Caco-2 (cell line): ENCODE measurements at regions of chr4 and their contacts with region 1.

Region 1: DNA sequence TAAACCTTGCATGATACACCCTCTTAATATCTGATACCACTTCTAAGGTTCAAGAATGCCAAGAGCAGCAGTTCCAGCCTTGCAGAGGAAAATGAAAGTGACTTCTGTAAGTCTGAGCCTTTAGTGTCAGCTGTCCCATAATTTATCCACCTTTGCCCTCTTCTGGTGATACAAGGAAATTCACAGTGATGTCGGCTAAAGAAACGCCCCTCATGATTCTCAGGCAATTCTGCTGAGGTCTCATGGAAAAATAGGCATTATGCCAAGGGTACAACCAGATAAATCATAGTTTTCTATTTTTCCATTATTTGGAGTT is 172.2 kb upstream of the CXCL13 start:
- DNase-seq: peak in 1 of 2 experiments; percentile 39
- H3K4me3 ChIP-seq: no peak overlapping the region
- H3K4me3 Mint-ChIP-seq: no peak overlapping the region
- H3K27ac Mint-ChIP-seq: no peak overlapping the region
- H3K4me1 ChIP-seq: no peaks in the 10 kb centered on the region
- H3K4me1 Mint-ChIP-seq: no peaks in the 10 kb centered on the region
- H3K27me3 ChIP-seq: no peaks in the 10 kb centered on the region
- H3K27me3 Mint-ChIP-seq: peaks cover 2% of the 10 kb centered on the region
- CTCF ChIP-seq: peak; percentile 43 to 52

Region 2: DNA sequence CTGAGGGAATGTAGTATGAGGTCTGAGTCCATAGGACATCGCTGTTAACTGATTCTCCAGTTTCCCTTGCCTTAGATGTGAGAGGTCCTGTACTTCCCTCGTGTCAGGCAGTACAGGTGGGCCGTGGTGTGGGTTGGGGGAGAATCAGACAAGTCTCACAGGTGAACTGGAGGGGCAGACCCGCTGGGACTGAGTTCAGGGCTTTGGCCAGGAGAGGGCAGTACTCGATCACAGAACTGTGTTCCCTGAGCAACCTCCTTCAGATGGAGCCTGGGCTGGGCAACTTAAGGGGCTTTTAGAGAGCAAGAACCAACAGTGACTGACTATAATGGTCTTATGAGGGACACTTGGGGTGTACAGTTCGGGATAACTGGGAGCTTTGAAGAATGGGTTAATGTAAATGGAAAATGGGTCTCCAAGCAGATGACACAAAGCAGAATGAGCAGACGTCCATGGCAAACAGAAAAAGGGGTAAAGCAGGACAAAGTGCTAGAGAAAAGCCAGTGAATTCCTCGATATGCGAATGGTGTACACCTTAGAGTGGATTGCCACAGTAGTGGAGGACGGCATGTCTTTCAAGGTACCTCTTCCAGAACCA is 192.8 kb before region 1 on chr4:
- CTCF ChIA-PET with region 1: no interaction called
- POLR2A ChIA-PET with region 1: no interaction called
- intact Hi-C with region 1: loop called (anchors 5 kb)
- DNase-seq: peak; percentile 74 to 78
- H3K4me3 ChIP-seq: no peak overlapping the region
- H3K4me3 Mint-ChIP-seq: no peak overlapping the region
- H3K27ac Mint-ChIP-seq: no peak overlapping the region
- H3K4me1 ChIP-seq: no peaks in the 10 kb centered on the region
- H3K4me1 Mint-ChIP-seq: no peaks in the 10 kb centered on the region
- H3K27me3 ChIP-seq: no peaks in the 10 kb centered on the region; the same call in 1 of the 2 replicates
- H3K27me3 Mint-ChIP-seq: peaks cover 6% of the 10 kb centered on the region
- CTCF ChIP-seq: peak; percentile 73 to 79

Region 3: GRCh38 chr4:77367638-77368037 is 65.7 kb before region 1 on chr4:
- CTCF ChIA-PET with region 1: interaction called, 3 read pairs
- POLR2A ChIA-PET with region 1: no interaction called
- intact Hi-C with region 1: loop called (anchors 5 kb)
- DNase-seq: no peak
- H3K4me3 ChIP-seq: no peak overlapping the region
- H3K4me3 Mint-ChIP-seq: no peak overlapping the region
- H3K27ac Mint-ChIP-seq: no peak overlapping the region
- H3K4me1 ChIP-seq: no peaks in the 10 kb centered on the region
- H3K4me1 Mint-ChIP-seq: no peaks in the 10 kb centered on the region
- H3K27me3 ChIP-seq: no peaks in the 10 kb centered on the region
- H3K27me3 Mint-ChIP-seq: peaks cover 12% of the 10 kb centered on the region
- CTCF ChIP-seq: no peak